ENCODE measurements at regions of chr9 and their contacts with region 1.

Region 1: GRCh38 chr9:71783120-71783530 is 14.8 kb upstream of the CEMIP2 start:
- DNase-seq: peak; percentile 81
- H3K4me3 Mint-ChIP-seq: peak overlapping the region; percentile 70
- H3K27ac Mint-ChIP-seq: peak overlapping the region; percentile 99
- H3K4me1 Mint-ChIP-seq: peaks cover 48% of the 10 kb centered on the region
- H3K27me3 Mint-ChIP-seq: no peaks in the 10 kb centered on the region

Region 2: DNA sequence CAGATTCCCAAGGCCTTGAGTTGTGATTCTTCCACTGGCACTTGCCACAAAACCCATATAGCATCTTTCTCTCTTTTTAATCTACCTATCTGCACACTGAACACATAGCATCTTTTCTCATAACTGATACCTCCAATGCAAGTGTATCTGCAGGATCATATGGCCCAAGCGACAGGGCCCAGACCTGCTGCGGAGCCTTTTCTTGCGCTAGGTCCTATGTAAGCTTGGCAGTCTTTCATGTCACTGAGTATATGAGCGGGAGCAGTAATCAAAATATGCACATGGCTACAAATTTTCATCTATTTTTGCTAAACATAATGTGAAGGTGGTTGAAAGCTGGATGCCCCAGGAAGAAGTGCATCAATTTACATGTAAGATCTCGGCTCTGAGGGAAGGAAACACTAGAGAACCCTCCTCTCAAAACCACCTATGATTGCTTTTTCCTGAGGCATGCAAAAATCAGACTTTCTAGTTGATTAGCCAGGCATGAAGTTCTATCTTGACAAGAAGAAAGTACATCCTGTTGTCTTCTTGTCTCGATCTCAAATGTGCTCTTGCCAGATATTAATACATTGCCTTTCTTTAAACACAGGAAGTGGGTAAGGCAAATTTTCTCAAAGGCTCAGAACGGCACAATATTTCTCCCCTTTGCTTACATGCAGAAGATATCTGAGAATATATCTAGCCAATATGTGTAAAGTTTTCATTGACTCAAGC is 12.1 kb after region 1 on chr9:
- intact Hi-C with region 1: loop called (anchors 1 kb)
- DNase-seq: no peak
- H3K4me3 Mint-ChIP-seq: peak overlapping the region; percentile 56
- H3K27ac Mint-ChIP-seq: peak overlapping the region; percentile 96
- H3K4me1 Mint-ChIP-seq: peaks cover 39% of the 10 kb centered on the region
- H3K27me3 Mint-ChIP-seq: no peaks in the 10 kb centered on the region

Measured in activated T-helper 2 cell treated with anti-CD3 and anti-CD28 coated beads, Interferon-gamma antibody, Interleukin-2, Interleukin-4, amounts not matched to agents 10 μg/mL and 5 μg/mL and 100 μg/mL, durations not matched to agents 14 hours and 24 hours and 36 hours (primary cell).